HEK293 (cell line): ENCODE measurements at regions of chr3 and their contacts with region 1.

Region 1: GRCh38 chr3:8987645-8988383 is 24.5 kb upstream of the RAD18 start:
- H3K4me3 ChIP-seq: no peak overlapping the region
- H3K27ac ChIP-seq: no peak overlapping the region
- H3K4me1 ChIP-seq: no peaks in the 10 kb centered on the region
- CTCF ChIP-seq: peak; percentile 60; the same call in 1 of the 2 replicates

Region 2: DNA sequence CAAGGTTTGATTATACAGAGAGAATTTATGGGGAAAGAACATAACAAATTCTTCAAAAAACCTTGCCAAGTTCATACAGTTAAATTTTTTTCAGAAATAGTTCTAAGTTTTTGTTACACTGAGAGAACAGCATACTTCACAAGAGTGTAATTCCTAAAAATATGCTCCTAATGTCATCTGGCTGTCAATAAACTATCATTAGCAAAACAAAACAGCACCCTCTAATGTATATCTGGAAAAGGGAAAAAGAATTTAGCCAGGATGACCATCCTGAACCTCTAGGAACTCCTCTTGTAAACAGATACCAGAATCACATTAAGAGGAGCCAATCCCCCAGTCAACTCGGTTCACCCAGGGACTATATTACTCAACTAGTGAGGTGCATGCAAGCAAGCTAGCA is 87.8 kb before region 1 on chr3:
- CTCF ChIA-PET with region 1: no interaction called
- POLR2A ChIA-PET with region 1: no interaction called
- H3K4me3 ChIP-seq: no peak overlapping the region
- H3K27ac ChIP-seq: no peak overlapping the region
- H3K4me1 ChIP-seq: no peaks in the 10 kb centered on the region
- CTCF ChIP-seq: no peak

Region 3: DNA sequence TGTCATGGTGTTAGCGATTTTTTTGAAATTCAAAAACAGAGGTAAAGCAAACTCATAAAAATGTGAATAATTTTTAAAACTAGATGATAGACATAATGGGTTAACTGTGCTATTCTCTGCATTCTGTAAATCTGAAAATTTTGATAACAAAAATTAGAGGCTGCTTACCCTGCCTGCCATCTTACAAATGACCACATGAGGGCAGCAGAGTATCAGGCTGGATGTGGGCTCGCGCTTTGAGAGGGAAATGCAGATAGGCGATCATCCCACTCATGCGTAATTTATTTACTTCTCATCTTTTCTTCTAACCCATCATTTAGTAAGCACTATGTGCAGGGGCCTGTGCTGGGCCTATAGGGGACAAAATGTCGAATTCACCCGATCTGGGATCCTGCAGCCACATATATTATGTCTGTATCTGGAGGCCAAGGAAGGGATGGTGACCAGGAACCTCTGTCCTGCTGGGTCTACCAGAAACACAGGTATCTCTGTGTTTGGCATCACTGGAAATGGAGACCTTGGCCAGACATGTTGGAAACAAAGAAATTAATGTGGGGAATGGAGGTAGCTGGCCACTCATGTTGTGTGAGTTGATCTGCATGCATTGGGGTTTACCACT is 16.7 kb before region 1 on chr3:
- CTCF ChIA-PET with region 1: interaction called, 28 read pairs
- POLR2A ChIA-PET with region 1: no interaction called
- H3K4me3 ChIP-seq: no peak overlapping the region
- H3K27ac ChIP-seq: no peak overlapping the region
- H3K4me1 ChIP-seq: no peaks in the 10 kb centered on the region
- CTCF ChIP-seq: peak; percentile 63

Region 4: GRCh38 chr3:9013782-9014563 is 26.2 kb after region 1 on chr3:
- CTCF ChIA-PET with region 1: interaction called, 18 read pairs
- POLR2A ChIA-PET with region 1: no interaction called
- H3K4me3 ChIP-seq: no peak overlapping the region
- H3K27ac ChIP-seq: no peak overlapping the region
- H3K4me1 ChIP-seq: no peaks in the 10 kb centered on the region
- CTCF ChIP-seq: peak; percentile 7; the same call in 1 of the 2 replicates

Region 5: GRCh38 chr3:9047452-9048346 is 59.9 kb after region 1 on chr3:
- CTCF ChIA-PET with region 1: interaction called, 11 read pairs
- POLR2A ChIA-PET with region 1: no interaction called
- H3K4me3 ChIP-seq: no peak overlapping the region
- H3K27ac ChIP-seq: no peak overlapping the region
- H3K4me1 ChIP-seq: no peaks in the 10 kb centered on the region
- CTCF ChIP-seq: no peak

Region 6: GRCh38 chr3:9067352-9067975 is 79.7 kb after region 1 on chr3:
- CTCF ChIA-PET with region 1: interaction called, 28 read pairs
- POLR2A ChIA-PET with region 1: no interaction called
- H3K4me3 ChIP-seq: no peak overlapping the region
- H3K27ac ChIP-seq: no peak overlapping the region
- H3K4me1 ChIP-seq: no peaks in the 10 kb centered on the region
- CTCF ChIP-seq: peak; percentile 68

Region 7: DNA sequence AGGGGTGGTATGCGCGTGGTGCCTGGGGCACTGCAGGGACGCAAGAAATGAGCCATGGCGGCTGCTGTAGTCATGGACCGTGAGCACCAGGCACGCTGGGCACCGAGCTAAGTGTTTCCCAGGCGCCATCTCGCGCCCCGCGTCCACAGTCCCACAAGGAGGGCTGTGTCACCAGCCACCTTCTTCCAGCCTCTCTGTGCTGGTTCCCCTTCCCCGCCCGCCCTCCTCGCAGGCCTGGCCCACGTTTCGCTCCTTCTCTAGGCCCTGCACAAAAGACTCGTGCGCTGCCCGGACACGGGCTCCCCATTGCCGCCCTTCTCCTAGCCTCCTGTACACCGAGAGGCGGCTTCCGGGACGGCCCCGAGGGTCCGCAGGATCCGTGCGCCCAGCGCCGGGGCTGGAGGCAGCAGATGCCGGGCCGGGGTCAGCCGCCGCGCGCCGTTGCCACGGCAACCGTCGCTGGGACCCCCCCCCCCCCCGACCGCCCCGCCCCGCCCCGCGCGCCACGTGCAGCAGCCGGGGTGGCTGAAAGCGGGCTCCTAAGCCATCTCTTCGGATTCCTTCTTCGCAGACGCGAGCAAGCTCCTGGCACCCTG is 148.2 kb after region 1 on chr3:
- CTCF ChIA-PET with region 1: no interaction called
- POLR2A ChIA-PET with region 1: no interaction called
- H3K4me3 ChIP-seq: no peak overlapping the region
- H3K27ac ChIP-seq: no peak overlapping the region
- H3K4me1 ChIP-seq: peaks cover 7% of the 10 kb centered on the region
- CTCF ChIP-seq: no peak